MCF 10A (cell line): ENCODE measurements at regions of chr5 and their contacts with region 1.

Region 1: DNA sequence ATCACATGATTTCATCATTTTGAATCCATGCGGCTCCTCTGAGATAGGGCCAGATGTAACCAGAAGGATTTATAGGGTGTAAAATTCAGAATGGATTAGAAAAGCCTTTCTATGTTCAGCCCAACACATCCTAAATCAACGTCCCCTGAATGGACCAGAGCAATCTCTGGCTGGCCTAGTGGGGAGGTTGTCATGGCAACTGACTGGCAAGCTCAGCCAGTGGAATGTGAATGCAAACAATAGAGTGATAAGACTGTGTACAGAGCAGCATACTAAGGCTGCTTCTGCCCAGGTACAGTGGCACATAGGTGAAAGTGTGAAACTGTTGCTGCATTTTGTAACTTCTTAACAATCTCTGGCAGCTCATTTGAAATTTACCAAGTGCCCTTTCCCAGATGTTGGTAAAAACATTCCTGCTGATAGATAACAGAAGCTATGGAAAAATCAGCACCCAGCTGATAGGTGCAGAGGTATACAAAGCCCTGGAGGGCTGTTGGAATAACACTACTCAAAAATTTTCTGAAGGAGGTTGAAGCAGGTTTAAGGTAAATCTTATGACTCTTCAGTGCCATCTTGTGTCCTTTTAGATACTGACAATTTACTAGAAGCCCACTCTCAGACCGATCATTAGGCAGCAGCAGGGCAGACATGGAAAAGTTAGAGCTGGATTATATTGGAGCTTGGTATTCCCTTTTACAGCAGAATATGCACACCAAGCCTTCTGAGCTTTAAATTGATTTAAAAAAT is 267.2 kb downstream of the RAB3C start:
- DNase-seq: peak; percentile 48
- H3K4me3 Mint-ChIP-seq: no peak overlapping the region
- H3K27ac Mint-ChIP-seq: no peak overlapping the region
- H3K4me1 Mint-ChIP-seq: no peaks in the 10 kb centered on the region
- H3K27me3 Mint-ChIP-seq: peaks cover 86% of the 10 kb centered on the region
- CTCF ChIP-seq: peak; percentile 76

Region 2: DNA sequence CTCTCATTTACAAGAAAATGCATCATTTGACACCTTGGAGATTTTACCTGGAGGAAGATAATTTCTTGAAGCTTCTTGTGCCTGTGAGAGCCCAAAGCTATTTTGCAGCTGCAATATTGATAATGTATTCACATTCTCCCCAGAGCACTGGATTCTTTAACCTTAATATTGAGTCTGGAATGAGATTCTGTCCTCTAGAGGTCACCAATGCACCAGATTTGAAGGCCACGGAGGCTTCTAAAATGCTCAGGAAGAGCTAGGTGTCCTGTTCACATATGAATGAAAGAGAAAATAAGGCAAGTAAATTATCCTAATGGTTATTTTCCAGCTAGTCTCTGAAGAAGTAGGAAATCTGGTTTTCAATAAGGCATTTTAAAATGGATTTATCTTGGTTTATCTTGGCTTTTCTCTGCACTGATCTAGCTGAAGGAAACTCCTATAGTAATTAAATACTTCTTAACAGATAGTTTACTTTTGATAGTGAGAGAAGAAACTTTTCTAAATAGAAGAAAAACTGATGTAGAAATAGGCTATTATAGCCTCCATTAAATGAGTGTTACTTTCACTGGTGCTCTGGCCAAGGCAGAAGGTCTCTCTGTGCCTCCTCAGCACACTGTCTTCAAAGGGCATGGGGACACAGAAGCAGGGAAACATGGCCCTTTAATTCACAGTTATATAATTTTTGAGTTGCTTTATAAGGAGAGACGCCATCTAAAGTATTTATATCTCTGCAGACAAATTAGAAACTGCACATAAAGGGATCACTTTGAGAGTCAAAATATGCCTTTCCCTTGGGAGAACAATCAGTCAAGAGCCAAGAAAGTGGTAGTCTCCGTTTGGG is 1070.5 kb before region 1 on chr5:
- CTCF ChIA-PET with region 1: interaction called, 10 read pairs
- POLR2A ChIA-PET with region 1: no interaction called
- intact Hi-C with region 1: no loop called
- DNase-seq: peak; percentile 78
- H3K4me3 Mint-ChIP-seq: no peak overlapping the region
- H3K27ac Mint-ChIP-seq: no peak overlapping the region
- H3K4me1 Mint-ChIP-seq: peaks cover 6% of the 10 kb centered on the region
- H3K27me3 Mint-ChIP-seq: no peaks in the 10 kb centered on the region
- CTCF ChIP-seq: peak; percentile 64

Region 3: DNA sequence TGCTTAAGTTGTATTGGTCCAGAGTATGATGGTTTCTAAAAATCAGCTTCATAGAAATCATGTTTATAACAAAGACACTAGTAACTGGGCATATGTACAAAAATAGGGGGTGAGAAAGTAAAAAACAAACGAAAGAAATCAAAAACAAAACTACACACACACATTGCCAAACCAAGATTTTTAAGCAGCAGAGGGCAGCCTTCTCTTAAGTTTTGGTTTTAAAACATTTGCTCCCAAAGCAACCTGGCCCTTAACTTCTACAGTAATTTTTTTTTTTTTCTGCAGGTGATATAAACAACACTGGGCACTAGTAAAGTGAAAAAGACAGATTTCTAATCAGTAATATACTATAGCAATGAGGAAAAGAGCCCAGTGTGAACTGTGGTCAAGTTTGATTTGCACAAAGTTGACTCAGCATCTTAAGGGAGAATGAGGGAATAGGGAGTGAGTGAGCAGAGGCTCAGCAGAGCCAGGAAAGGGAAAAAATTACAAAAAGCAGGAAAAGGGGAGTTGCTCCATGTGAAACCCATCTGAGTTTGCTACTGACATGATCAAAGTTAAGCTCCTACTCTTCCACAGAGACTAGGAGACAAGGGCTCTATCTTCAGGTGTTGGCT is 372.2 kb before region 1 on chr5:
- CTCF ChIA-PET with region 1: interaction called, 47 read pairs
- POLR2A ChIA-PET with region 1: interaction called, 3 read pairs
- intact Hi-C with region 1: loop called (anchors 5 kb)
- DNase-seq: no peak
- H3K4me3 Mint-ChIP-seq: no peak overlapping the region
- H3K27ac Mint-ChIP-seq: no peak overlapping the region
- H3K4me1 Mint-ChIP-seq: no peaks in the 10 kb centered on the region
- H3K27me3 Mint-ChIP-seq: no peaks in the 10 kb centered on the region
- CTCF ChIP-seq: peak; percentile 17

Region 4: GRCh38 chr5:58498340-58498942 is 351.7 kb before region 1 on chr5:
- CTCF ChIA-PET with region 1: interaction called, 211 read pairs
- POLR2A ChIA-PET with region 1: interaction called, 3 read pairs
- intact Hi-C with region 1: loop called (anchors 1 kb)
- DNase-seq: peak; percentile 58
- H3K4me3 Mint-ChIP-seq: no peak overlapping the region
- H3K27ac Mint-ChIP-seq: no peak overlapping the region
- H3K4me1 Mint-ChIP-seq: no peaks in the 10 kb centered on the region
- H3K27me3 Mint-ChIP-seq: peaks cover 95% of the 10 kb centered on the region
- CTCF ChIP-seq: peak; percentile 76

Region 5: GRCh38 chr5:58505971-58506640 is 344.0 kb before region 1 on chr5:
- CTCF ChIA-PET with region 1: interaction called, 211 read pairs
- POLR2A ChIA-PET with region 1: no interaction called
- intact Hi-C with region 1: no loop called
- DNase-seq: no peak
- H3K4me3 Mint-ChIP-seq: no peak overlapping the region
- H3K27ac Mint-ChIP-seq: no peak overlapping the region
- H3K4me1 Mint-ChIP-seq: no peaks in the 10 kb centered on the region
- H3K27me3 Mint-ChIP-seq: peaks cover 94% of the 10 kb centered on the region
- CTCF ChIP-seq: no peak

Region 6: DNA sequence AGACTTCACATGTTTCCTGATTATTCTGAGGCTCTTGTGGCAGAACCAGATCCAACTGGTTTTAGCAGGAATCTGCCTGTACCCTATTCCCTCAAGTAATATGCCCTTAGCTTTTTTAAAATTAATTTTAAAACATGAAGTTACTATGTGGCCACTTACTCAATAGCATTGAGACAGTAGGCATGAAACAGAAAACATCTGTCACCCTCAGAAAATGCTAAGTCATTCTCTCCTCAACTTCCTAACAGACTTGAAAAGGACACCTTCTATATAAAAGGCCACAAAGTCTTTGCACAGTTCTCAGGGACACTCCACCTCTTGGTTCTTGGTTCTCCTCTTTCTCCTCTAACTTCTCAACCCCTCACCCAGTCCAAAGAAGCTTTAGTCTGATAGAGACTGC is 10.6 kb after region 1 on chr5:
- CTCF ChIA-PET with region 1: interaction called, 42 read pairs
- POLR2A ChIA-PET with region 1: no interaction called
- intact Hi-C with region 1: no loop called
- DNase-seq: no peak
- H3K4me3 Mint-ChIP-seq: no peak overlapping the region
- H3K27ac Mint-ChIP-seq: no peak overlapping the region
- H3K4me1 Mint-ChIP-seq: no peaks in the 10 kb centered on the region
- H3K27me3 Mint-ChIP-seq: peaks cover 42% of the 10 kb centered on the region
- CTCF ChIP-seq: no peak

Region 7: GRCh38 chr5:58871648-58872242 is 21.7 kb after region 1 on chr5:
- CTCF ChIA-PET with region 1: interaction called, 10 read pairs
- POLR2A ChIA-PET with region 1: no interaction called
- intact Hi-C with region 1: no loop called
- DNase-seq: peak; percentile 68
- H3K4me3 Mint-ChIP-seq: no peak overlapping the region
- H3K27ac Mint-ChIP-seq: no peak overlapping the region
- H3K4me1 Mint-ChIP-seq: no peaks in the 10 kb centered on the region
- H3K27me3 Mint-ChIP-seq: peaks cover 47% of the 10 kb centered on the region
- CTCF ChIP-seq: peak; percentile 36